Heart right ventricle (tissue), 16 donors: ENCODE measurements at regions of chr15 and their contacts with region 1.

Region 1: GRCh38 chr15:74768771-74769342 is 13.0 kb upstream of the CSK start:
- DNase-seq: peak; percentile 58 to 62
- ATAC-seq: peak; percentile 29 to 73 (median 60)
- H3K4me3 ChIP-seq: no peak overlapping the region
- H3K27ac ChIP-seq: no peak overlapping the region
- H3K4me1 ChIP-seq: peaks cover 0 to 18% (median 8%) of the 10 kb centered on the region in 9 donors
- H3K27me3 ChIP-seq: peaks cover 0 to 4% (median 0%) of the 10 kb centered on the region in 7 donors
- CTCF ChIP-seq: peak; percentile 73 to 88 (median 84)

Region 2: DNA sequence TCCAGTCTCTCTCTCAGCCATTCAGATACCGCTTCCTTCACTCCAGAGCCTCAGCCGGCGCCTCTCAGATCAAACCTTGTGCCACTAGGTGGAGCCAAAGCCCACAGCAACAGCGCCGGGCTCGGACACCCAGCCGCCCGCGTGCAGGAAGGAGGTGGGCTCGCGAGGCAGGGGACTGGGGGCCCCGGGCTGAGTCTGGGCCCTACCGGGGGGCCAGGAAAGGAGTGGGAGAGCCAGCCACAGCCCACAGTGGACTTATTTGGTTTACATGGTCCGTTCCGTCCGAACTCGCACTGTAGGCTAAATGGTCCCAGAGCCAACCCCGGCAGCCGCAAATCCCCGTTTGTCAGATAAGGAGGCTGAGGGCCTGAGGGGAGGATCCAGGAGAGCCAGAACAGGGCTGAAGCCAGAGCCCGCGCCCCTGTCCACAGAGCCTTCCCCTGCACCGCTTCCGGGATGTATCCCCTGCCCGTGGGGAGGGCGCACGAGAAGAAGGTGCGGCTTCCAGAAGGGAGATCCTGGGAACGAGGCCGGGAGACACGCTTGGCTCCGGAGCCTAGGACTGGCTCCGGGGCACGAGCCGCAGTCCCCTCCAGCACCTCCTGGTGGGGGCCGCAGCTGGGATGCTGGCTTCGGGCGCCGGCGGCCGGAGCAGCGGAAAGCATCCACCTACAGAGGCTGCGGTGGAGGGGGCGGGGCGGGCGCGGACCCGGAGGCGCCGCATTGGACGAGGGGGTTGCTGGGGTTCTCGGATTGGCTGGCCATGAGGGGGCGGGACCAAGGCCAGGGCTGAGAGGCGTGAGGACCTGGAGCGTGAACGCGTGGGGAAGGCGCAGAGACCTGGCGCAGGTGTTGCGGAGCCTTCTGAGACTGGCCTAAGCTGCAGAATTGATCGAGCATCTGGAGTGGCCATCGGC is 394.9 kb before region 1 on chr15:
- intact Hi-C with region 1: loop called in 8 of 10 experiments (anchors 2 to 10 kb)
- DNase-seq: peak; percentile 91 to 93
- ATAC-seq: peak; percentile 96 to 99 (median 98)
- H3K4me3 ChIP-seq: peak overlapping the region; percentile 29 to 80 (median 62)
- H3K27ac ChIP-seq: peak overlapping the region in 1 of 10 donors; percentile 66
- H3K4me1 ChIP-seq: peaks cover 7 to 28% (median 16%) of the 10 kb centered on the region in 9 donors
- H3K27me3 ChIP-seq: peaks cover 0 to 23% (median 4%) of the 10 kb centered on the region in 7 donors
- CTCF ChIP-seq: peak; percentile 83 to 93 (median 92)

Region 3: DNA sequence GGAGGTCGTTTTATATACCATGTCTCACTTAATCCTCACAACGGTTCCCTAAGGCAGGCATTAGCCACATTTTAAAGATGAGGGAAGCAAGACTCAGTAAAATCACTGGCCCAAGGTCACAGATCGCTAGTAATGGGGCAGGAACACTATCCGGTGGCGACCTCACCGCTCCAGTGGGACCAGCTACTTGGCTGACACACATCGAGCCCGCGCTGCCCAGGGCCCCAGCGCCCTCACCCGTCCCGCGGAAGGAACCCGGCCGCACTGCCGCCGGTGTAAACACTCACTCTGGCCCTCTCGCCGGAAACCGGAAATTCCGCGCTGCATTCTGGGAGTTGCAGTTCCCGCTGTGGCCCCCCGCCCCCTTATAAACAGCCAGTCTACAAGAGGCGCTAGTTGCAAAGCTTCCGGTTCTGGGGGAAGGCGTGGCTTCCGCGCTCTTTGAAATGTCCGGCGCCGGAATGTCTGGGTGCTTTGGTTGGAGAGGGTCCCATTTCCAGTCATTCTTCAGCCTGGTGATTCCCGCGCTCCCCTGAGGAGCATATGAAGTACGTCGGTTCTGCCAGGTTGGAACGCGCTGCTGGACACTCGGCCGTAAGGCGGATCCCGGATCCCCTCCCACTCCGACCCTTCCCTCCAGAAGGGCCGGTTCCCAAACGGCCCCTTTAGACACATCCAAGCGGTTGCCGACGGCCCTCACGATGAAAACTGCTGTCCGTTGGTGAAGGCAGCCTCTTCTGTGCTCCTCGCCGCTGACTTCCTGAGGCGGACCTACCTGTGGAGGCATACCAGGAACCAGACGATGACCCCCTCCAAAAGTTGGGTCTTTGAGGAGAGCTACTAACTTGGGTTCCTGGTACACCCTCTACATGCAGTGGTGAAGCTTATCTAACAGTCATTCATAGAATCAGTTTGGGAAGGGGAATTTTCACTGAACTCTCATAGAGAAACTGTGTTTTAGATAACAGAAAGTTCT is 307.7 kb before region 1 on chr15 and contains the start of gene UBL7:
- intact Hi-C with region 1: no loop called
- DNase-seq: peak; percentile 95 to 98
- ATAC-seq: peak; percentile 99 to 100 (median 99)
- H3K4me3 ChIP-seq: peak within 1 kb of the TSS; percentile 48 to 95 (median 72)
- H3K27ac ChIP-seq: peak within 1 kb of the TSS; percentile 54 to 92 (median 86)
- H3K4me1 ChIP-seq: peaks cover 0 to 25% (median 18%) of the 10 kb centered on the region in 9 donors
- H3K27me3 ChIP-seq: no peaks in the 10 kb centered on the region
- CTCF ChIP-seq: peak in 5 of 9 donors; percentile 14 to 48 (median 45)
- total RNA-seq, gene UBL7: 49.1 to 56.6 (median 52.7) TPM

Region 4: GRCh38 chr15:74635228-74635627 is 133.6 kb before region 1 on chr15:
- intact Hi-C with region 1: loop called (anchors 1 to 2 kb)
- DNase-seq: peak in 1 of 2 donors; percentile 61
- ATAC-seq: peak; percentile 49 to 78 (median 74)
- H3K4me3 ChIP-seq: no peak overlapping the region
- H3K27ac ChIP-seq: no peak overlapping the region
- H3K4me1 ChIP-seq: peaks cover 0 to 7% (median 0%) of the 10 kb centered on the region in 9 donors
- H3K27me3 ChIP-seq: no peaks in the 10 kb centered on the region
- CTCF ChIP-seq: peak; percentile 66 to 93 (median 87)

Region 5: DNA sequence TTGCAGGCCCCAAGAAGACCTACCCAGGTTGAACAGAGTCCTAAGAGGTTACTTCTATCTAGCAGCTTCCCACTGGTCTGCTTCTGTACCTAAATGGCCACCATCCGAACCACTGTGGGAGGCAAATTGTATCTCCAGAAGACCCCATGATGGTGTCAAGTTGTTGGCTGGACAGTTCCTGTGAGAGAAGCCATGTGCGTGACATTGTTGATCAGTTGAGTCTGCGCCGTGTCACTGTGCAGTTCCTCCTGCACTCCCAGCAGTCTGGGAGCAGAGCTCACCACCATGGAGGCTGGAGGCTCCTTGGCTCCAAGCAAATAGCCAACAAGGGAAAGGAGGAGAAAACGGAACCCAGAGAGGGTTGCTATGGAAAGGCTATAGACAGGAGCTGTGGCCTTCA is 36.0 kb before region 1 on chr15:
- intact Hi-C with region 1: no loop called
- DNase-seq: no peak
- ATAC-seq: no peak
- H3K4me3 ChIP-seq: no peak overlapping the region
- H3K27ac ChIP-seq: no peak overlapping the region
- H3K4me1 ChIP-seq: peaks cover 0 to 3% (median 0%) of the 10 kb centered on the region in 9 donors
- H3K27me3 ChIP-seq: peaks cover 0 to 49% (median 21%) of the 10 kb centered on the region in 7 donors
- CTCF ChIP-seq: no peak

Region 6: GRCh38 chr15:74787251-74788041 is 18.6 kb after region 1 on chr15:
- intact Hi-C with region 1: no loop called
- DNase-seq: peak in 1 of 2 donors; percentile 62
- ATAC-seq: peak; percentile 22 to 50 (median 32)
- H3K4me3 ChIP-seq: peak overlapping the region in 4 of 10 donors; percentile 8 to 88 (median 20)
- H3K27ac ChIP-seq: peak overlapping the region; percentile 14 to 98 (median 90)
- H3K4me1 ChIP-seq: peaks cover 59 to 99% (median 98%) of the 10 kb centered on the region in 9 donors
- H3K27me3 ChIP-seq: no peaks in the 10 kb centered on the region
- CTCF ChIP-seq: peak in 6 of 9 donors; percentile 38 to 65 (median 50)

Region 7: GRCh38 chr15:74799856-74800547 is 31.1 kb after region 1 on chr15:
- intact Hi-C with region 1: loop called in 5 of 10 experiments (anchors 2 to 5 kb)
- DNase-seq: peak; percentile 72 to 76
- ATAC-seq: peak; percentile 82 to 93 (median 88)
- H3K4me3 ChIP-seq: no peak overlapping the region
- H3K27ac ChIP-seq: peak overlapping the region in 7 of 10 donors; percentile 10 to 75 (median 51)
- H3K4me1 ChIP-seq: peaks cover 4 to 55% (median 23%) of the 10 kb centered on the region in 9 donors
- H3K27me3 ChIP-seq: no peaks in the 10 kb centered on the region
- CTCF ChIP-seq: peak in 8 of 9 donors; percentile 92 to 99 (median 98)

Region 8: GRCh38 chr15:74835307-74835823 is 66.5 kb after region 1 on chr15:
- intact Hi-C with region 1: loop called in 3 of 10 experiments (anchors 5 to 10 kb)
- DNase-seq: peak; percentile 49 to 69
- ATAC-seq: peak in 6 of 8 donors; percentile 30 to 51 (median 39)
- H3K4me3 ChIP-seq: no peak overlapping the region
- H3K27ac ChIP-seq: no peak overlapping the region
- H3K4me1 ChIP-seq: peaks cover 0 to 20% (median 8%) of the 10 kb centered on the region in 9 donors
- H3K27me3 ChIP-seq: no peaks in the 10 kb centered on the region
- CTCF ChIP-seq: peak; percentile 53 to 83 (median 76)

Region 9: DNA sequence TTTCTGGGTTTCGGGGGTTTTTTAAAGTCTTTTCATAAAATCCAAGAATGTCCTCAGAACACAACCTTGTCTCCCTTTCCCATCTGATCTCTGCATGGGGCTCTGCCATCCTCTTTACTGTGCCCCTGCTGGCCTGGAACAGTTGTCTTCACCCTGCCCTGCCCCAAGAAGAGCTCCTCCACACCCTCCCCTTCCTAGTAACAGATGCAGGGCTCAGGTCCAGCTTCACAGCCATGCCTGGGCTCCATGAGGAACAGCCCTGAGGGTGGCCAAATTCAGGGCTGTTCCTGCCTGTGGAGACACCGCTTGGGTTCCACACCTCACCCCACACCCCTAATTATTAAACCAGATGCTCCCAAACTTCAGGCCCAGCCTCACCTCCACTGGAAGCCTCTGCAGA is 87.0 kb after region 1 on chr15:
- intact Hi-C with region 1: no loop called
- DNase-seq: no peak
- ATAC-seq: peak in 6 of 8 donors; percentile 35 to 62 (median 54)
- H3K4me3 ChIP-seq: no peak overlapping the region
- H3K27ac ChIP-seq: no peak overlapping the region
- H3K4me1 ChIP-seq: peaks cover 4 to 48% (median 42%) of the 10 kb centered on the region in 9 donors
- H3K27me3 ChIP-seq: no peaks in the 10 kb centered on the region
- CTCF ChIP-seq: no peak

Region 10: DNA sequence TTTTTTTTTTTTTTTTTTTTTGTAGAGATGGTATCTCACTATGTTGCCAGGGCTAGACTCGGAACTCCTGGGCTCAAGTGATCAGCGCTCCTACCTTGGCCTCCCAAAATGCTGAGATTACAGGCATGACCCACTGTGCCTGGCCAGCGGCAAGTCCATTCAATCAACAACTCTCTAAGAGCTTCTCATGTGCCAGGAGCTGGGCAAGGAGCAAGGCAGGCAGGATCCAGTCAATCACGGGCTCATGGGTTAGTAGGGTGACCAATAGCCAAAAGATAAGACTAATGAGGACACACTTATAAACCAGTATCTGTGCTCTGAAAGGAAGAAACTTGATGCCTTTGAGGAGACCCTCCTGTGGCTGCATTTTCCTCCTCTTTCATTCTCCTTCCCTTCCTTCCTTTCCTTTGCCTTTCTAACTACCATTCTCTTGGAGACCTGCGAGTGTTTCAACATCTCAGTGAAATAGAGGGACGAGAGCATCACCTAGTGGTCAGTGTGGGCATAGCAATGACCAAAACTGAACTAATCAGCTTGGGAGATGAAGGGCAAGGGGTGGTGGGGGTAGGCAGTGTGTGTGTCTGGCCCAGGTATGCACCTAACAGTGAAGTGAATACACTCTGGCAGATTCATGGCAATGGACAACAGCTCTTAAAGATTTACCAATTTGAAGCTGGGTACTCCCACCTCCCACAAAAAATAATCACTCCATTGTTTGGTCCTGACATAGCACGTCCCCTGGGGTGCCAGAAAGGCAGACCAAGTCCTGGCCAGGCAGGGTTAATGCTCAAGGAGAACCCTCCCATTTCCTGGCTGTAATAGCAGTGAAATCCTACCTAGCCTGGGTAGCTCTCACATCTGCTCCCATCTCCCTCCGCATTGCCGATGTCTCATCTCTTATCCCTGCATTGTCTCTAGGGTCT is 181.5 kb after region 1 on chr15:
- intact Hi-C with region 1: loop called (anchors 1 to 5 kb)
- DNase-seq: peak in 1 of 2 donors; percentile 73
- ATAC-seq: peak; percentile 66 to 82 (median 69)
- H3K4me3 ChIP-seq: no peak overlapping the region
- H3K27ac ChIP-seq: no peak overlapping the region
- H3K4me1 ChIP-seq: peaks cover 0 to 20% (median 14%) of the 10 kb centered on the region in 9 donors
- H3K27me3 ChIP-seq: peaks cover 0 to 4% (median 0%) of the 10 kb centered on the region in 7 donors
- CTCF ChIP-seq: peak; percentile 88 to 98 (median 95)